ENCODE measurements at regions of chr16 and their contacts with region 1.

Region 1: GRCh38 chr16:68040507-68041288 is 17.6 kb downstream of the DUS2 start:
- DNase-seq: peak; percentile 87
- CTCF ChIP-seq: peak; percentile 88

Region 2: DNA sequence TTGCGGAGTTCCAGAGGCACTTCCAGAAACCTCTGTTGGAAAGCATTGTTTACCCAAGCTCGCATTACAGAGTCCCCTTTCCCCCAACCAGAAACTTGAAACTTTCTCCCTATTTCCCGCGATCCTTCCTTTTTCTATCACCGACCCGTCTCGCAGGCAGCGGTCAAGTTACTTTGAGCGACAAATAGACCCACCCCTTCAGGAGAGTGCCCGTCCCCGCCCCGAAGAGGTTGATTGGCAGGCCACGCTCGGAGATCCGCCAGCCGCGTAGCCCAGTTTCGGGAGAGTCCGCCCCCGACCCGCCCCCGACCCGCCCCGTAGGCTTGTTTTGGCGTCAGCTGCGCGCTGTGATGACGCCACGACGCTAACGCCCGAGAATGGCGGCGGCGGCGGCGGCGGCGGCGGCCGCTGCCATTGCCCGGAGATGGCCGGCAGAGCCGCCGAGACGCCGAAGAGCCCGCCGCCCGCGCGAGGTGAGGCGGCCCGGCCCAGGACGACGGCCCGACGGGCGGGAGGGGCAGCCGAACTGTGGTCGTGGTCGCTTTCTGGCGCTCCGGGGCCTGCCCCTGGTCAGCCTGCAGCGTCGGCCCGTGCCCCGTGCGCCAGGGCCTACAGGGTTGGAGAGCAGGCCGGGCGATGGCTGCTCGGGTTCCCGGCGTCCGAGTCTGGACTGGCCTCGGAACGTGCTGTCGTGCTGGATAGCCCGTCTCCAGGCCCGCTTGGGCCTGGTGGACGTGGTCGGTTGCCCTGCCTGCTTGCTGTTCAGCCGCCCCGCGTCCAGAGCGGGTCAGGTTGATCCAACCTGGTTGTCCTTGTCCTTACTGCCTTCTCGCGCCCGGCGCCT is 147.6 kb before region 1 on chr16 and contains the start of gene PSKH1:
- CTCF ChIA-PET with region 1: interaction called, 12 read pairs
- POLR2A ChIA-PET with region 1: no interaction called
- DNase-seq: peak; percentile 100
- CTCF ChIP-seq: no peak

Region 3: DNA sequence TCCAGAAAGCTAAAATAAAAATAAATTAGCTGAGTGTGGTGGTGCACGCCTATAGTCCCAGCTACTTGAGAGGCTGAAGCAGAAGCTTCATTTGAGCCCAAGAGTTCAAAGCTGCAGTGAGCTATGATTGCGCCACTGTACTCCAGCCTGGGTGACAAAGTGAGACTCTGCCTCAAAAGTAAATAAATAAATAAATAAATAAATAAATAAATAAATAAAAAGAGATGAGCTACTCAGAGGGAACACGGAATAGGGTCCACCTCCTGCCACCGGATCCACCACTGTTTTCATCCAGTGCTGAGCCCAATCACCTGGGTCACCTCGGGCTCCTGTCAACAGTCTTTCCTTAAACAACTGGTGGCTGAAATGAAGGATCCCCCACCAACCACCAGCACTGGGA is 53.7 kb before region 1 on chr16:
- CTCF ChIA-PET with region 1: interaction called, 18 read pairs
- POLR2A ChIA-PET with region 1: no interaction called
- DNase-seq: no peak
- CTCF ChIP-seq: no peak

Region 4: DNA sequence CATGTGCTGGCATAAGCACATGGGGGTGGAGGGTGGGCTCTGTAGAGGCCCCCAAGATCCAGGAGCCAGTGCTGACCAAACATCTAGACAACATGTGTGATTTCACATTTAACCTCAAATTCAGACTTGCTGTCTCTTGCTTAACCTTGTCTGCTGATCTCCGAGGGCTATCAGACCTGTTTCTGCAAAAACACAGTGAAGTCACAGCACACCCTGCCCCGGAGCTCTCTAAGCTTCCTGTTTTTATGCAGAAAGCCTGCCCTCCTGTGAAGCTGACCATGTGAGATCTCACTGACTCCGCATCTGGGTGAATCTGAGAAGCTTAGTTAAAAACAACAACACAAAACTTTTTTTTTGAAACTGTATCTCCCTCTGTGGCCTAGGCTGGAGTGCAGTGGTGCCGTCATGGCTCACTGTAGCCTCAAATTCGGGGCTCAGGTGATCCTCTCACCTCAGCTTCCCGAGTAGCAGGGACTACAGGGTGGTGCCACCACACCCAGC is 34.9 kb before region 1 on chr16:
- CTCF ChIA-PET with region 1: interaction called, 11 read pairs
- POLR2A ChIA-PET with region 1: no interaction called
- DNase-seq: no peak
- CTCF ChIP-seq: no peak

Region 5: DNA sequence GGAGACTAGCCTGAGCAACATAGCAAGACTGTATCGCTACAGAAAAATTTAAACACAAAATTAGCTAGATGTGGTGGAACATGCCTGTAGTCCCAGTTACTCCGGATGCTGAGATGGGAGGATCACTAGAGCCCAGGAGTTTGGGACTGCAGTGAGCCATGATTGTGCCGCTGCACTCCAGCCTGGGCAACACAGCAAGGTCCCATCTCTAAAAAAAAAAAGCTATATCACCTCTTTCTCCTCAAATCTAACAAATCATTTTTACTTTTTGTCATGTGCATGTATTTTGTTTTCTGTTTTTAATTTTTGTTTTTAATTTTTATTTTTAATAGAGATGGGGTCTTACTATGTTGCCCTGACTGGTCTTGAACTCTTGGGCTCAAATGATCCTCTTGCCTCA is 11.7 kb before region 1 on chr16:
- CTCF ChIA-PET with region 1: interaction called, 49 read pairs
- POLR2A ChIA-PET with region 1: interaction called, 4 read pairs
- DNase-seq: no peak
- CTCF ChIP-seq: no peak

Region 6: GRCh38 chr16:68064791-68065365 is 24.2 kb after region 1 on chr16:
- CTCF ChIA-PET with region 1: interaction called, 15 read pairs
- POLR2A ChIA-PET with region 1: no interaction called
- DNase-seq: peak; percentile 67
- CTCF ChIP-seq: peak; percentile 78

Region 7: GRCh38 chr16:68298907-68299561 is 258.3 kb after region 1 on chr16:
- CTCF ChIA-PET with region 1: no interaction called
- POLR2A ChIA-PET with region 1: no interaction called
- DNase-seq: no peak
- CTCF ChIP-seq: no peak

Measured in GM10248 (cell line).